AG04450 (cell line): ENCODE measurements at regions of chr15 and their contacts with region 1.

Region 1: GRCh38 chr15:31128919-31129768 is 27.6 kb upstream of the TRPM1 start:
- DNase-seq: peak; percentile 20
- H3K4me3 ChIP-seq: no peak overlapping the region
- H3K27ac ChIP-seq: no peak overlapping the region
- H3K27me3 ChIP-seq: peaks cover 5% of the 10 kb centered on the region
- CTCF ChIP-seq: peak; percentile 99

Region 2: GRCh38 chr15:30903497-30904201 is 225.5 kb before region 1 on chr15 and contains the start of gene FAN1:
- CTCF ChIA-PET with region 1: interaction called, 16 read pairs
- POLR2A ChIA-PET with region 1: no interaction called
- DNase-seq: peak; percentile 56
- H3K4me3 ChIP-seq: peak within 1 kb of the TSS; percentile 88
- H3K27ac ChIP-seq: peak within 1 kb of the TSS; percentile 47
- H3K27me3 ChIP-seq: peaks cover 2% of the 10 kb centered on the region
- CTCF ChIP-seq: no peak
- polyA plus RNA-seq, gene FAN1: 10.3 and 11.8 TPM in 2 replicates

Region 3: GRCh38 chr15:30991255-30992072 is 137.7 kb before region 1 on chr15 and contains the start of gene MTMR10:
- CTCF ChIA-PET with region 1: interaction called, 19 read pairs
- POLR2A ChIA-PET with region 1: interaction called, 6 read pairs
- DNase-seq: peak; percentile 32
- H3K4me3 ChIP-seq: peak within 1 kb of the TSS; percentile 88
- H3K27ac ChIP-seq: peak within 1 kb of the TSS; percentile 88
- H3K27me3 ChIP-seq: no peaks in the 10 kb centered on the region
- CTCF ChIP-seq: no peak
- polyA plus RNA-seq, gene MTMR10: 12.9 and 17.7 TPM in 2 replicates

Region 4: DNA sequence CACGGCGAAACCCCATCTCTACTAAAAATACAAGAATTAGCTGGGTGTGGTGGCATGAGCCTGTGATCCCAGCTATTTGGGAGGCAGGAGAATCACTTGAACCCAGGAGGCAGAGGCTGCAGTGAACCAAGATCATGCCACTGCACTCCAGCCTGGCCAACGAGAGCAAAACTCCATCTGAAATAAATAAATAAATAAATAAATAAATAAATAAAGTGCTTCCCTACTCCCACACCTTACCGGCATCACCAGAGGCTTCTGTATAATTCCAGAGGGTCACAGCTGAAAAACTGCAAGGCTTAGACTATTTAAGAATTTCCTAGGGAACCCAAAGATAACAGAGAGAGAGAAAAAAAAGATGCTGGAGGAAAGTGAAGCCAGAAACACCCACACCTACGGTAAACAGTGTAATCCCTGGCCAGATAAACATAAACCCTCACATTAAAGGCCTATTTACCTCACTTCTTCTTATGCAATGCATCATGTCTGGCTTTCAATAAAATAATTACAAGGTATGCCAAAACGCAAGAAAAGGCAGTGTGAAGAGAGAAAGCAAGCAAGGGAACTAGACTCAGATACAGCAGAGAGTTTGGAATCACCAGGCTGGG is 12.6 kb before region 1 on chr15:
- CTCF ChIA-PET with region 1: interaction called, 16 read pairs
- POLR2A ChIA-PET with region 1: no interaction called
- DNase-seq: no peak
- H3K4me3 ChIP-seq: no peak overlapping the region
- H3K27ac ChIP-seq: no peak overlapping the region
- H3K27me3 ChIP-seq: peaks cover 3% of the 10 kb centered on the region
- CTCF ChIP-seq: no peak